Activated T-helper 2 cell treated with anti-CD3 and anti-CD28 coated beads, Interferon-gamma antibody, Interleukin-2, Interleukin-4, amounts not matched to agents 10 μg/mL and 5 μg/mL and 100 μg/mL, durations not matched to agents 14 hours and 24 hours and 36 hours (primary cell): ENCODE measurements at regions of chr3 and their contacts with region 1.

Region 1: GRCh38 chr3:44712455-44713075 is at the start of gene ZNF502:
- DNase-seq: no peak
- H3K4me3 Mint-ChIP-seq: peak within 1 kb of the TSS; percentile 77
- H3K27ac Mint-ChIP-seq: no peak within 1 kb of the TSS
- H3K4me1 Mint-ChIP-seq: no peaks in the 10 kb centered on the region
- H3K27me3 Mint-ChIP-seq: no peaks in the 10 kb centered on the region
- total RNA-seq, gene ZNF502: 0.27 and 0.62 TPM in 2 replicates

Region 2: DNA sequence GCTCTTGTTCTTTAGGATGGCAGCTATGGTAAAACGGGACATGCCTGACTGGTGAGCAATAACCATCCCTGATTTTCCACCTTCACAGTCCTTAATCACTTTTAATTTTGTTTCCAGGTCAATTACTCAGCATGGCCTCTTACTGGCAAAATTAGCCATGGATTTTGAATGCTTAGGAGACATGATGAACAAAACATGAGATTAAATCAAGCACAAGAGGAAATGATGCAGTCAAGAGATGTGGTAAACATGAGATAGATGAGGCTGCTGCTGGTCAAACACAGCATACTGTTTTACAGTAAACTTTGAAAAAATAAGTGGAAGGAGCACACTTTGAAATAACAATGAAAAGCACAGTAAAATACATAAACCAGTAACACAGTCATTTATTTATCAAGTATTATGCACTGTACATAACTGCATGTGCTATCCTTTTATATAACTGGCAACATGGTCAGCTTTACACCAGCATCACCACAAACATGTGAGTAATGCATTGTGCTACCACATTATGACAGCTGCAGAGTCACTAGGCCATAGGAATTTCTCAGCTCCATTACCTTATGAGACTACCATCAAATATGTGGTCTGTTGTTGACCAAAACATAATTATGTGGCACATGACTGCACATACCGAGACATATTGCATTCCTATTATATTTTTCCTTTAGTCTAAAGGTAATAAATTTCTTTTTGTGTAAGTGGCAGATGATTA is 30.2 kb before region 1 on chr3:
- intact Hi-C with region 1: no loop called
- DNase-seq: no peak
- H3K4me3 Mint-ChIP-seq: no peak overlapping the region
- H3K27ac Mint-ChIP-seq: no peak overlapping the region
- H3K4me1 Mint-ChIP-seq: peaks cover 8% of the 10 kb centered on the region
- H3K27me3 Mint-ChIP-seq: peaks cover 6% of the 10 kb centered on the region

Region 3: DNA sequence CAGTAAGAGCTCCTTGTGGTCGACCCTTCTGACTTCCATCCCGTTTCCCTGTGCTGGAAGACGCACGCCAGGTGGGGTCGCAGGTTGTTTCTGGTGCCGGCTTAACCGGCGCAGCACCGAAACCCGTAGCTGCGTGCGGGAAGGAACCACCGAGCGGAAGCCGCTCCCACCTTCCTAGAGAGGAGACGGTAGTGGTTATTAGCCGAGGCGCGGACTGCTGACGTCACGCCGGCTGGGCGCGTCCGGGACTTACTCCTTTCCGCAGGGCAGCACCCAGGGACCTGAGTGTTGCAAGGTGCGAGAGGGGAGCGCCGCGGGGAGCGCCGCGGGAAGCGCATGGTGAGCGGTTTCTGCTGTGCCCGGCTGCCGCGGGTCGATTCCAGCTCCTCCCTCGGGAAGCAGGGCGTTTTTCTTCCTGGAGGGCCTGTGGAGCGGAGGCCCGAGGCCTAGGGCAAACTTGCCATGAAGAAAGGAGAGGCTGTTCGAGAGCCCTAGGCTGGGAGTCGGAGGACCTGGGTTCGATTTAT is 16.9 kb after region 1 on chr3 and contains the start of gene ZNF501:
- intact Hi-C with region 1: loop called (anchors 1 kb)
- DNase-seq: peak; percentile 76
- H3K4me3 Mint-ChIP-seq: peak within 1 kb of the TSS; percentile 92
- H3K27ac Mint-ChIP-seq: peak within 1 kb of the TSS; percentile 78
- H3K4me1 Mint-ChIP-seq: peaks cover 11% of the 10 kb centered on the region
- H3K27me3 Mint-ChIP-seq: no peaks in the 10 kb centered on the region
- total RNA-seq, gene ZNF501: 1.1 and 1.3 TPM in 2 replicates

Region 4: GRCh38 chr3:45154641-45155147 is 442.1 kb after region 1 on chr3:
- intact Hi-C with region 1: no loop called
- DNase-seq: no peak
- H3K4me3 Mint-ChIP-seq: no peak overlapping the region
- H3K27ac Mint-ChIP-seq: no peak overlapping the region
- H3K4me1 Mint-ChIP-seq: no peaks in the 10 kb centered on the region
- H3K27me3 Mint-ChIP-seq: peaks cover 8% of the 10 kb centered on the region

Region 5: GRCh38 chr3:45297331-45297730 is 584.8 kb after region 1 on chr3:
- intact Hi-C with region 1: no loop called
- DNase-seq: no peak
- H3K4me3 Mint-ChIP-seq: no peak overlapping the region
- H3K27ac Mint-ChIP-seq: no peak overlapping the region
- H3K4me1 Mint-ChIP-seq: no peaks in the 10 kb centered on the region
- H3K27me3 Mint-ChIP-seq: peaks cover 36% of the 10 kb centered on the region